ENCODE measurements at regions of chr20 and their contacts with region 1.

Region 1: DNA sequence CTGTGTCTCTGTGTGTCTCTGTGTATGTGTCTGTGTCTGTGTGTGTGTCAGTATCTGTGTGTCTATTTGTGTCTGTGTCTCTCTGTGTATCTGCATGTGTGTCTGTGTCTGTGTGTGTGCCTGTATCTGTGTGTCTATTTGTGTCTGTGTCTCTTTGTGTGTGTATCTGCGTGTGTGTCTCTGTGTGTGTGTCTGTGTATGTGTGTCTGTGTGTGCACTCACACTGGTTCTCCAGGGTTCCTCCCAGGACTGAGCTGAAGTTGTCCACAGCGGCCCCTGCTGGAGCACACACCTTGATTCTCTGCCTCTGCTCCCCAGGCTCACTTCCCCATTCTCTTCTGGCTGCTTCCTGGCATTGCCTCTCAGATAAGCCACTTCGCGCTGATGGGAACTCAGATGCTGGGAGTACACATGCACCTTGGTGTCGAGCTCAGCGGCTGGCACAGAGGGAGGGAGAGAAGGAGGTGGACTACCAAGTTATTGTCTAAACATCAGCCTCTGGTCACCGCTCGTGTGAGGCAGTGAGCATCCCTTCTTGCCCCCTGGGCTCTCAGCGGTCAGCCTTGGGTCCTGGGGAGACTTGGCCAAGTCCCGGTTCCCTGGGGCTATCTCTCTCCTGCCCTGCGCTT is 104.9 kb upstream of the NXT1 start:
- DNase-seq: peak; percentile 46 to 68
- ATAC-seq: peak in 3 of 4 donors; percentile 60 to 73 (median 61)
- H3K4me3 ChIP-seq: no peak overlapping the region
- H3K27ac ChIP-seq: no peak overlapping the region
- H3K4me1 ChIP-seq: peaks cover 5% of the 10 kb centered on the region
- H3K27me3 ChIP-seq: peaks cover 0 to 7% (median 0%) of the 10 kb centered on the region in 3 donors
- CTCF ChIP-seq: peak; percentile 28

Region 2: DNA sequence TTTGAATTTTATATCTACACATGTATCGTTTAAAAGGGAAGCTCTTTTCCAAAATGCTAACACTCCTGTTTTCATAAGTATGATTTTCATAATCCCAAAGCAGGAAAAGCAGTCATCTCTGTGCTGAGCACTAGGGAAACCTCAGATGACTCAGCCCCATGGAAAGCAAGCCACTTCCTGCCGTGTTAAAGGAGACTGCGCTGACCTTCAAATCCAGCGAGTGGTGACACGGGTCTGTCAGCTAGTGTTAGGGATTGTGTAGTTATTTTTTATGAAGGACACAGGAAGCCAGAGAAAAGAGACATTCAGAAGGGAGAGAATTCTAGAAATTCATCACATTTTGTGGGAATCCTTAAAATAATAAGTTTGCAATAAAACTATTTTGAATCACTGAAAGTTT is 102.6 kb before region 1 on chr20:
- intact Hi-C with region 1: no loop called
- DNase-seq: peak; percentile 68 to 79
- ATAC-seq: peak; percentile 57 to 75 (median 70)
- H3K4me3 ChIP-seq: no peak overlapping the region
- H3K27ac ChIP-seq: peak overlapping the region; percentile 96
- H3K4me1 ChIP-seq: peaks cover 71% of the 10 kb centered on the region
- H3K27me3 ChIP-seq: no peaks in the 10 kb centered on the region
- CTCF ChIP-seq: no peak

Region 3: DNA sequence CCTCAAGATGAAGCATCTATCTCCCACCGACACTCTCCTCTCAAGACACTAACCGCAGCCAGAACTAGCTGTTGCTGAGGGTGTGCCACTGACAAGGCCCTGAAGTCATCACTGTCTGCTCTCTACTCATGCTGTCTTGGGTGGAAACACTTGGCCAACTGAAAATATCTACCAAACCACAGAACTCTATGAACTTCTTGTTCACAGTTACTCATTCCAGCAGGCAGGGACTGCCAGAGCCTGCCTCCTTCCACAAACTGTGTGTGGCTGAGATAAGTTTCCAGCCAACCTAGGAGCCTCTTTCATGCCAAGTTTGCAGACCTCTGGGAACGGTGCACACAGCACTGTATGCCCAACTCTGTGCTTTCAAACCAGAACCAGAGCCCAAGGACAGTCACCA is 59.4 kb after region 1 on chr20:
- intact Hi-C with region 1: no loop called
- DNase-seq: peak in 1 of 2 donors; percentile 66
- ATAC-seq: peak in 2 of 4 donors; percentile 40 to 55
- H3K4me3 ChIP-seq: no peak overlapping the region
- H3K27ac ChIP-seq: no peak overlapping the region
- H3K4me1 ChIP-seq: no peaks in the 10 kb centered on the region
- H3K27me3 ChIP-seq: no peaks in the 10 kb centered on the region
- CTCF ChIP-seq: no peak

Region 4: DNA sequence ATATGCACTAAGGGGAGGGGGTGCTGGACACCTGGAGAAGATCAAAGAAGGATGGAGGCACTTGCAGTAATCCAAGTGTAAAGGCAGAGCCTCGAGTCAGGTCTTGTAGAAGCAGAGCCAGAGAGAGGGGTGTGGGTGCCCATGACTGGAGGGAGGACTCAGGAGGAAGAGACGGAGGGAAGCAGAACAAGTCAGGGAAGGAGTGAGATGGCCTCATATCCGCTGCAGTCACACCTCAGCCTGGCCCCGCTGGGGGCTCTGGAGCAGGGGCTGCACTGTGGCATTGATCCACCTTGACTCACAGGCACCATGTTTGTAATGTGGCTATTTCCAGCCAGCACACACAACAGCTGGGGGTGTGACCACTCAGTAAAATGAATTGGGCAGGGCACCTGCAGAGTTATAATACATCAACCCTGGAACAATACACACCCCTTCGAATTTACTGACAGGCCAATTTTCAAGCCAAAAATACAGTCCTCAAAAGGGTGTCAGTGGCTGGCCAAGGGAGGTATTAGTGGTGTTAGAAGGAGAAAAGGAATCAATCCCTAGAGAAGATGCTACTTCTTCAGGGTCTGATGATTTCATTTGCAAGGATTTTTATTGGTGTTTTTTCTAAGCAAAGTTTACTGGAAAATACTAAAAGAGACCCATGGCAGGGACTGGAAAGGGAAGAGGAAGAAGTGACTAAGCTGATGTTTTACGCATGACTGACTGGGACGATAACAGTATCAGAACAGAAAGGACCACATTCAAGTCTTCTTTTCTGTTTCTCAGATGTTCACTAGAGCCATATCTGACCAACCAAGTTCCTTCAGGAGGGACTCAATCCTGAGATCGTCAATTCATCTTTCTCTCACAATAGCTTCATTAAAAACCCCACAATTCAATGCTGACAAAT is 86.0 kb after region 1 on chr20:
- intact Hi-C with region 1: loop called in 1 of 2 experiments (anchors 10 kb)
- DNase-seq: no peak
- ATAC-seq: no peak
- H3K4me3 ChIP-seq: no peak overlapping the region
- H3K27ac ChIP-seq: no peak overlapping the region
- H3K4me1 ChIP-seq: peaks cover 3% of the 10 kb centered on the region
- H3K27me3 ChIP-seq: no peaks in the 10 kb centered on the region
- CTCF ChIP-seq: no peak

Measured in psoas muscle (tissue), 8 donors.